Endothelial cell of umbilical vein (primary cell): ENCODE measurements at regions of chr12 and their contacts with region 1.

Region 1: GRCh38 chr12:121579981-121580868 is 598 bp downstream of the KDM2B start:
- DNase-seq: peak; percentile 58
- H3K4me3 ChIP-seq: peak overlapping the region; percentile 59 to 84 (median 76)
- H3K27ac ChIP-seq: peak overlapping the region; percentile 73
- H3K4me1 ChIP-seq: peaks cover 33% of the 10 kb centered on the region
- H3K27me3 ChIP-seq: no peaks in the 10 kb centered on the region
- CTCF ChIP-seq: no peak
- POLR2A ChIP-seq: peak; percentile 17

Region 2: GRCh38 chr12:121175383-121176227 is 404.6 kb before region 1 on chr12:
- CTCF ChIA-PET with region 1: no interaction called
- POLR2A ChIA-PET with region 1: no interaction called
- dilution Hi-C with region 1: no loop called
- intact Hi-C with region 1: no loop called
- DNase-seq: no peak
- H3K4me3 ChIP-seq: no peak overlapping the region
- H3K27ac ChIP-seq: no peak overlapping the region
- H3K4me1 ChIP-seq: peaks cover 17% of the 10 kb centered on the region
- H3K27me3 ChIP-seq: no peaks in the 10 kb centered on the region
- CTCF ChIP-seq: no peak
- POLR2A ChIP-seq: no peak

Region 3: GRCh38 chr12:121568971-121569751 is 11.1 kb before region 1 on chr12:
- CTCF ChIA-PET with region 1: interaction called, 3 read pairs
- POLR2A ChIA-PET with region 1: interaction called, 11 read pairs
- dilution Hi-C with region 1: no loop called
- intact Hi-C with region 1: no loop called
- DNase-seq: no peak
- H3K4me3 ChIP-seq: no peak overlapping the region
- H3K27ac ChIP-seq: no peak overlapping the region
- H3K4me1 ChIP-seq: no peaks in the 10 kb centered on the region
- H3K27me3 ChIP-seq: no peaks in the 10 kb centered on the region
- CTCF ChIP-seq: no peak
- POLR2A ChIP-seq: no peak

Region 4: DNA sequence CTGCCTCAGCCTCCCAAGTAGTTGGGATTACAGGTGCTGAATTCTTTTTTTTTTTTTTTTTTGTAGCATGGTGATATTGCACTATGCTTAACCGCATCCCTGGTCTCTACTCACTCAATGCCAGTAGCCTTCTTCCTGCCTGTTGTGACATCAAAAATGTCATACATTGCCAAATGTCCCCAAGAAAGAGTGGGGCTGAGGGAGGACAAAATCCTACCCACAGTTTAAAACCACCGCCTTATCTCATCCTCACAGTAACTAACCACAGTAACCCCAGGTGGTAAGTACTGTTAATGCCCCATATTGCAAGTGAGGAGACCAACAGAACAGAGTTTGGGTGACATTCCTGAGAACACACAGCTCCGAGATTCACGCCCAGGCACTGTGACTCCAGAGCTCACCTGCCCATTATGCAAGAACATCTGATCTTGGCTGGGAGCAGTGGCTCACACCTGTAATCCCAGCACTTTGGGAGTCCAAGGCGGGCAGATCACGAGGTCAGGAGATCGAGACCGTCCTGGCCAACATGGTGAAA is 69.7 kb after region 1 on chr12:
- CTCF ChIA-PET with region 1: no interaction called
- POLR2A ChIA-PET with region 1: no interaction called
- dilution Hi-C with region 1: no loop called
- intact Hi-C with region 1: no loop called
- DNase-seq: no peak
- H3K4me3 ChIP-seq: no peak overlapping the region
- H3K27ac ChIP-seq: no peak overlapping the region
- H3K4me1 ChIP-seq: no peaks in the 10 kb centered on the region
- H3K27me3 ChIP-seq: no peaks in the 10 kb centered on the region
- CTCF ChIP-seq: no peak
- POLR2A ChIP-seq: no peak